Activated naive CD4-positive, alpha-beta T cell treated with anti-CD3 and anti-CD28 coated beads for 36 hours (primary cell): ENCODE measurements at regions of chr11 and their contacts with region 1.

Region 1: DNA sequence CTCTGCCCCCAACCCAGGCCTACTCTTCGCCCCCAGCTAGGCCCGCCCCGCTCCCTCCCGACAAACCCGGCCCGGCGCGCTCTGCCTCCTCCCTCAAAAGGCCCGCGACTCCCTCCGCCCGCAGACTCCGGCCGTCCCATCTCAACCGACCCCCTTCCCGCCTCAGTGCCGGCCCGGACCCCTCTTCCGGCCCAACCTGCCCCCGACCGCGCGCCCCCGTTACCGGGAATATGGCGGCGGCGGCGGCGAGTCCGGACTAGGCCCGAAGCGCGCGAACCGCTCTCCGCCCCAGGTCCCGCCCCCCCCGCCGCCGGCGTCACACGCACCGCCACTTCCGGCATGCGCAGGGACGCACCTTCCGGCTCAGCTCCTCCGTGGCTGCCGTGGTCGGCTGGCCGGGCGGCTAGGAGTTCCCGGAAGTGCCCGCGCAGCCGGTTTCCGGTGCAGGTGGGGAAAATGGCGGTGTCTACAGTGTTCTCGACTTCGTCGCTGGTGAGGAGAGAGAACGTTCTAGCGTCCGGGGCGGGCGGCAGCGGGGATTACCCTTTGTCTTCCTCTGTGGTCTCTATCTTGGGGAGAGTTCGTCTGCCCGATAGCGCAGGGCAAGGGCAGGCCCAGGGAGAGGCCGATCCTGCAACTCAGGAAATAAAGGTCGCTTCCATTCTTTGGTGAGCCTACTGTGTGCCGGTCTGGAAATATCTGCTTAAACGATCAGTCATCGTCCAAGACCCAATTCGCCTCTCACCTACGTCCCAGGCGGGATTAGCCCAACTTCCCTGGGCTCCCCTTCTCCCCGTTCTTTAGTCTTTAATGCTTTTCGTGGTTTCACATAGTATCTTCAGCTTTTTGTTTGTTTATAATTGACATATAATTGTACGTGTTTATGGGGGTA is at the starts of genes CPSF7 and SDHAF2:
- DNase-seq: peak; percentile 98
- H3K4me3 Mint-ChIP-seq: peak within 1 kb of the TSS; percentile 98
- H3K27ac Mint-ChIP-seq: peak within 1 kb of the TSS; percentile 97
- H3K4me1 Mint-ChIP-seq: peaks cover 65% of the 10 kb centered on the region
- H3K27me3 Mint-ChIP-seq: no peaks in the 10 kb centered on the region
- total RNA-seq, gene CPSF7: 106 to 108 TPM
- total RNA-seq, gene SDHAF2: 23.7 to 27.0 TPM

Region 2: DNA sequence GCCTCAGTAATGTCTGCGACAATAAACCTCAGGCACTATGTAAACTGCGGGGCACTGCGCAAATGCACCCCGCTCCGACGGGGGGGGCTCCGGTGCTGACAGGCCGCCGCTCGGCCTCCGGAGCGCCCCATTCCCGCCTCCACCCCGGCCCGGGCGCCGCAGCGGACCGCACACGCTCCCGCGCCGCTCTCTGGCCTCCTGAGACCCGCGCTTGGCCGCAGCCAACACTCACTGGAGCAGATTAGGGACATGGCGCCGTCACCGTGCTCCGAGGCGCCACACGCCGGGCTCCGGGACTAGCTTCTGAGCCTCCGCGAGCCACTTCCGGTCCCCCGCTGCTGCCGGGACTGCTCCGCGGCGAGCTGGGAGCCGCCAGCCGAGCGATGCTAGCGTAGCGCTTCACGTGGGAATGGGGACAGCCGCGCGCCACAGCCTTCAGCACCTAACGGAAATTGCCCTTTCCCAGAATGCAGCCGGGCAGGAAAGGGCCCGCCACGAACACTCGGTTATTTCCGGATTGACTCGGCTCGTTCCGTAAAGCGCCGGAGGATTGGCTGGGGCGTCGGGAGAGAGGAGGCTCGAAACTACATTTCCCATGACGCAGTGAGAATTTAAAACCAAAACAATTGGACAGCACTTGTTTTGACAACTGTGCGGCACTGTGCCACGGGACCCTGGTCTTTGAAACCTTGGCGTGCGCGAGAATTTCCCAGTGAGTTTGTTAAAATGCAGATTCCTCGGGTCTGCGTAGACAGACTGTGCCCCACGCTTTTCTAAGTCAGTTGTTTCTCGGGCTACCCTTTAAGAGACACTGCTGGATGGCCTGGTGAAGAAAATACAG is 523.6 kb before region 1 on chr11 and contains the start of gene PRPF19:
- CTCF ChIA-PET with region 1: no interaction called
- intact Hi-C with region 1: loop called (anchors 1 kb)
- DNase-seq: peak; percentile 100
- H3K4me3 Mint-ChIP-seq: peak within 1 kb of the TSS; percentile 80
- H3K27ac Mint-ChIP-seq: peak within 1 kb of the TSS; percentile 92
- H3K4me1 Mint-ChIP-seq: peaks cover 40% of the 10 kb centered on the region
- H3K27me3 Mint-ChIP-seq: no peaks in the 10 kb centered on the region
- total RNA-seq, gene PRPF19: 108 to 119 TPM

Region 3: GRCh38 chr11:61361686-61362541 is 68.0 kb before region 1 on chr11 and contains the starts of genes CYB561A3 and TMEM138:
- CTCF ChIA-PET with region 1: interaction called, 12 read pairs
- intact Hi-C with region 1: loop called (anchors 1 kb)
- DNase-seq: peak; percentile 94
- H3K4me3 Mint-ChIP-seq: peak within 1 kb of the TSS; percentile 100
- H3K27ac Mint-ChIP-seq: peak within 1 kb of the TSS; percentile 96
- H3K4me1 Mint-ChIP-seq: peaks cover 42% of the 10 kb centered on the region
- H3K27me3 Mint-ChIP-seq: no peaks in the 10 kb centered on the region
- total RNA-seq, gene CYB561A3: 31.7 to 31.8 TPM
- total RNA-seq, gene TMEM138: 35.6 to 41.4 TPM

Region 4: GRCh38 chr11:61411589-61411988 is 18.3 kb before region 1 on chr11:
- CTCF ChIA-PET with region 1: interaction called, 8 read pairs
- intact Hi-C with region 1: loop called (anchors 2 kb)
- DNase-seq: no peak
- H3K4me3 Mint-ChIP-seq: no peak overlapping the region
- H3K27ac Mint-ChIP-seq: no peak overlapping the region
- H3K4me1 Mint-ChIP-seq: peaks cover 3% of the 10 kb centered on the region
- H3K27me3 Mint-ChIP-seq: no peaks in the 10 kb centered on the region

Region 5: DNA sequence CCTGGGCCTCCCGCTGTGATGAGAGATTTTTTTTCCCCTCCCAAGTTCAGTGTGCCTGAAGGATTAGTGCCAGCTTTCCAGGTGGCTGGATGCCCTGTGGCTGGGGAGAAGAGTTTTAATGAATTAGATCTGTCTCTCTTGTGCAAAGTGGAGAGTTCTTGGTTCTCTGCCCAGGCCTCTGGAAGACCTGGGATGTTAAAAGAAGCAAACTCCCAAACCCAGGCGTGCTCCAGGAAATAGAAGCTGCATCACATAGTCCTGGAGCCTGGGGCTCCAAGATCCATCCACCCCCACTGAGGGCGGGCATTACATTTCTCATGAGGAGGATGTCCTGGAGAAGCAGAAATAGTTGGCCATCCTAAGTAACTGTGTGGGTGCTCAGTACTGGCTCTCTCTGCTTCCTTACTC is 30.5 kb after region 1 on chr11:
- CTCF ChIA-PET with region 1: interaction called, 12 read pairs
- intact Hi-C with region 1: no loop called
- DNase-seq: no peak
- H3K4me3 Mint-ChIP-seq: no peak overlapping the region
- H3K27ac Mint-ChIP-seq: no peak overlapping the region
- H3K4me1 Mint-ChIP-seq: peaks cover 2% of the 10 kb centered on the region
- H3K27me3 Mint-ChIP-seq: no peaks in the 10 kb centered on the region

Region 6: DNA sequence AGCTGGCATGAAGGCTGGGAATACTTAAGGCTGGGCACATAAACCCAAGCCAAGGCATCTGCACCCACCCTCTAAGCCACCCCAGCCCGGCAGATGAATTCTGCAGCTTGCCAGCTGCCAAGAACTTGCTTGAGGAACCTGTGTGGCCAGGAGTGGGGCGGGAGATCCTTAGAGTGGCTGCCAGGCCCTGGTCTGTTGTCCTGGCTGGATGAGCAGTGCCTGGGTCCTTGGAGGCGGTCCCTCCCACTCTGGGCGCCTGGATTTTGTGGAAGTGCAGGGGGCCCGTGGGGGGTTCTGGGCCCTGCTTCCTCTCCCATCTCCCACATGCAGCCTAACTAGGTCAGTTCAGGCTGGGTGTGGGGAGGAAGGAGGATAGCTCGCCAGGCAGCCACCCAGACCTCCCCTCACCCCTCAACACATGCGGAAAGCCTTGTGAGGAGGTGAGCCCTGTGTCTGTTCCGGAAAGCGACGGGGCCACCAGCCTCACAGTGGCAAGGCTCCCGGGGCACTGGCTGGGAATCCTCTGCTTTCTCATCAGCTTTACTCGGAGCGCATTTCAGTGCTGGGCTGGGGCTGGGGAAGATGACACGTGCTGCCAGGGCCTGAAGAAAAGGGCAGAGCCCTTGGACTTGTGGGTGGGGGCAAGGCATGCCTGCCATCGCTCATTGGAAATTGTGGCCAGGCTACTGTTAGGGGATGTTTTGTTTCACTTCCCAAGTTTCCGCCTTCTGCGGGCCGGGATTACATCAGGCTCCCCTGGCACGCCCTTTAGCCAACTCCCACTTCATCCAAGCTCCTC is 258.6 kb after region 1 on chr11:
- CTCF ChIA-PET with region 1: no interaction called
- intact Hi-C with region 1: no loop called
- DNase-seq: no peak
- H3K4me3 Mint-ChIP-seq: no peak overlapping the region
- H3K27ac Mint-ChIP-seq: no peak overlapping the region
- H3K4me1 Mint-ChIP-seq: peaks cover 6% of the 10 kb centered on the region
- H3K27me3 Mint-ChIP-seq: peaks cover 7% of the 10 kb centered on the region